Right ventricle myocardium superior (tissue), 1 donor: ENCODE measurements at regions of chr16 and their contacts with region 1.

Region 1: GRCh38 chr16:30902029-30902972 is 5.9 kb downstream of the CTF1 start:
- DNase-seq: peak; percentile 87
- ATAC-seq: peak; percentile 90

Region 2: GRCh38 chr16:30429678-30430427 is 472.4 kb before region 1 on chr16 and contains the start of gene DCTPP1:
- intact Hi-C with region 1: no loop called
- DNase-seq: peak; percentile 96
- ATAC-seq: peak; percentile 98
- total RNA-seq, gene DCTPP1: 38.4 TPM

Region 3: DNA sequence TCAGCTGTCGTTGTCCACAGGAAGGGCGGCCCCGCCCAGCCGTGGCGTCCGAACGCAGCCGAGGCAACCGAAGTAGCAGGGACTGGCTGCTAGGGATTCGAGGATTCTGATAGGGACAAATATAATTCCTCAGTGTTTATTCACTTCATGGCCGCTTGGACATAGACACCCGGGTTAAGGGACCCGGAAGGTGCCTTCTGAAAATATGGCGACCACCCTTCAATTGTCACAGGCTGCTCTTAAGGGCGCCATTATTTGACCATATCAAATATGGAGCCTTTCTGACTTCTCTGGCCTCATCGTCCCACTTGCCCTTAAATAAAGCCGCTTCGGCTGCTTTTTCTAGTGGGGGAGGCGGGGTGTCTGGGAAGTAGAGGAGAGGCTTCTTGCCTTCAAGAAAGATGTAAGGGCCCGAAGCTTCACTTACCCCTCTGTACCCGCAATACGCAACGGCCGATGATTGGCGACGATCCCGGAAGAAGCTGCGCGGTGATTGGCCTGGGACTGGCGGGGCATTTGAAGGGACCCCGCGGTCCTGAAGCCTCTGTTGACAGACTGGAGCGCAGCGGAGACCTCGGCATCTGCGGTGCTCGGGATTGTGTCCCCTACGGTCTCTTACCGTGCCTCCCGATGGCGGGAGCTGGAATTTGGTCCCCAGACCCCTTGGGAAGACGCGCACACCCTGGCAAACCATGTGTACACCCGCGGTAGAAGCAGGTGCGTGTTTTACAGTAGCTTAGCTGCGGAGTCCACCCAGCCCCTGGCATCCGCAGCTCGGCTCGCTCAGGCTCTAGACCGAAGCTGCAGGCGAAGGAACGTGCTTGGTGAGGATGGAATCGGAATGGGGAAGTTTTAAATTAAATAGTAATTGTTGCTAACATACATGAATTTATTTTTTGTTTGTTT is 330.4 kb before region 1 on chr16 and contains the start of gene ZNF688:
- intact Hi-C with region 1: no loop called
- DNase-seq: peak; percentile 96
- ATAC-seq: peak; percentile 90
- total RNA-seq, gene ZNF688: 12.2 TPM

Region 4: GRCh38 chr16:30650369-30651123 is 251.8 kb before region 1 on chr16 and contains the start of gene PRR14:
- intact Hi-C with region 1: no loop called
- DNase-seq: peak; percentile 100
- ATAC-seq: peak; percentile 92
- total RNA-seq, gene PRR14: 18.9 TPM

Region 5: GRCh38 chr16:30844671-30845449 is 57.4 kb before region 1 on chr16:
- intact Hi-C with region 1: loop called (anchors 5 kb)
- DNase-seq: no peak
- ATAC-seq: peak; percentile 93